CD4-positive, alpha-beta memory T cell (primary cell): ENCODE measurements at regions of chr4 and their contacts with region 1.

Region 1: GRCh38 chr4:242121-242848 is 63.0 kb downstream of the ZNF732 start:
- DNase-seq: peak; percentile 73 to 78 (median 75)
- H3K4me3 ChIP-seq: peak overlapping the region; percentile 63 to 75
- H3K4me3 Mint-ChIP-seq: peak overlapping the region; percentile 87 to 93 (median 89)
- H3K27ac ChIP-seq: peak overlapping the region; percentile 39
- H3K27ac Mint-ChIP-seq: peak overlapping the region; percentile 75 to 95 (median 90)
- H3K4me1 ChIP-seq: peaks cover 6% of the 10 kb centered on the region
- H3K4me1 Mint-ChIP-seq: peaks cover 8 to 11% (median 10%) of the 10 kb centered on the region in 4 donors
- H3K27me3 ChIP-seq: no peaks in the 10 kb centered on the region
- H3K27me3 Mint-ChIP-seq: no peaks in the 10 kb centered on the region

Region 2: GRCh38 chr4:124275-125081 is 117.8 kb before region 1 on chr4 and contains the start of gene ZNF718:
- CTCF ChIA-PET with region 1: no interaction called
- POLR2A ChIA-PET with region 1: no interaction called
- intact Hi-C with region 1: loop called (anchors 1 kb)
- DNase-seq: peak; percentile 82 to 94 (median 91)
- H3K4me3 ChIP-seq: peak within 1 kb of the TSS; percentile 71 to 87
- H3K4me3 Mint-ChIP-seq: peak within 1 kb of the TSS; percentile 95 to 100 (median 98)
- H3K27ac ChIP-seq: peak within 1 kb of the TSS; percentile 69
- H3K27ac Mint-ChIP-seq: peak within 1 kb of the TSS; percentile 96 to 99 (median 97)
- H3K4me1 ChIP-seq: peaks cover 38% of the 10 kb centered on the region
- H3K4me1 Mint-ChIP-seq: peaks cover 22 to 49% (median 40%) of the 10 kb centered on the region in 4 donors
- H3K27me3 ChIP-seq: no peaks in the 10 kb centered on the region
- H3K27me3 Mint-ChIP-seq: no peaks in the 10 kb centered on the region
- total RNA-seq, gene ZNF718: 13.0 to 14.0 TPM

Region 3: GRCh38 chr4:498328-498904 is 256.1 kb after region 1 on chr4:
- CTCF ChIA-PET with region 1: no interaction called
- POLR2A ChIA-PET with region 1: no interaction called
- intact Hi-C with region 1: loop called (anchors 5 kb)
- DNase-seq: no peak
- H3K4me3 ChIP-seq: peak overlapping the region in 1 of 2 donors; percentile 88
- H3K4me3 Mint-ChIP-seq: peak overlapping the region; percentile 92 to 95 (median 93)
- H3K27ac ChIP-seq: peak overlapping the region; percentile 89
- H3K27ac Mint-ChIP-seq: peak overlapping the region; percentile 93 to 97 (median 96)
- H3K4me1 ChIP-seq: peaks cover 22% of the 10 kb centered on the region
- H3K4me1 Mint-ChIP-seq: peaks cover 25 to 65% (median 47%) of the 10 kb centered on the region in 4 donors
- H3K27me3 ChIP-seq: no peaks in the 10 kb centered on the region
- H3K27me3 Mint-ChIP-seq: no peaks in the 10 kb centered on the region

Region 4: DNA sequence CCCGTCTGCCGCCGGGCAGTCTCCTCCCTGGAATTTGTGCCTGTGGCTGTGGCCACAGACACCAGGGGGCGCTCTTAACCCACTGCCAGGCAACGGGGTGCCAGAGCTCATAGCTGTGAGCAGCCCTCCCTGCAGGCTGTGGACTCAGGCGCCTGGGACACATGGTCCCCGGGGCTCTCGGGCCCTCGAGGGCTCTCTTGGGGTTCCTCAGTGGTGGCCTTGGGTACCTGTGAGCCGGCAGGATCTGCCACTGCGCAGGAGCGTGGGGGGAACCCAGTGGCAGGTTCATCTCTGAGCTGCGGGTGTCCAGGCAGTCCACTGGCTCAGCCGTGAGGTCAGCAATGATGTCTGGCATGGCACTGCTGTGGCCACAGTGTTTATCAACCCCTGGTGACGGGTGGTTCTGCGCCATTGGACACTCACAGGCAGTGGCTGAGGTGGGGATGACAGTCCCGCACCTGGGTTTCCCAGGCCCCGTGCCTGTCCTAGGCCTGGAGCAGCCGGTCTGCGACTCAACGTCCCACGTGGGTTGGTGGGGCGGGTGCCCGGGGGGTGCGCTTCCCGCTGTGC is 500.5 kb after region 1 on chr4:
- CTCF ChIA-PET with region 1: interaction called, 3 read pairs
- POLR2A ChIA-PET with region 1: no interaction called
- intact Hi-C with region 1: loop called (anchors 2 kb)
- DNase-seq: peak; percentile 66 to 74 (median 67)
- H3K4me3 ChIP-seq: no peak overlapping the region
- H3K4me3 Mint-ChIP-seq: no peak overlapping the region
- H3K27ac ChIP-seq: no peak overlapping the region
- H3K27ac Mint-ChIP-seq: peak overlapping the region in 2 of 7 donors; percentile 30 to 48
- H3K4me1 ChIP-seq: no peaks in the 10 kb centered on the region
- H3K4me1 Mint-ChIP-seq: peaks cover 0 to 4% (median under 1%) of the 10 kb centered on the region in 4 donors
- H3K27me3 ChIP-seq: no peaks in the 10 kb centered on the region
- H3K27me3 Mint-ChIP-seq: no peaks in the 10 kb centered on the region

Region 5: GRCh38 chr4:986879-987623 is 744.8 kb after region 1 on chr4 and contains the start of gene IDUA:
- CTCF ChIA-PET with region 1: no interaction called
- POLR2A ChIA-PET with region 1: no interaction called
- intact Hi-C with region 1: loop called (anchors 2 kb)
- DNase-seq: peak; percentile 79 to 84 (median 82)
- H3K4me3 ChIP-seq: peak within 1 kb of the TSS; percentile 76 to 83
- H3K4me3 Mint-ChIP-seq: peak within 1 kb of the TSS; percentile 88 to 95 (median 90)
- H3K27ac ChIP-seq: peak within 1 kb of the TSS; percentile 60
- H3K27ac Mint-ChIP-seq: peak within 1 kb of the TSS; percentile 40 to 92 (median 83)
- H3K4me1 ChIP-seq: peaks cover 34% of the 10 kb centered on the region
- H3K4me1 Mint-ChIP-seq: peaks cover 8 to 35% (median 15%) of the 10 kb centered on the region in 4 donors
- H3K27me3 ChIP-seq: no peaks in the 10 kb centered on the region
- H3K27me3 Mint-ChIP-seq: no peaks in the 10 kb centered on the region
- total RNA-seq, gene IDUA: 63.0 to 64.1 TPM

Region 6: GRCh38 chr4:1260418-1261106 is 1018.3 kb after region 1 on chr4:
- CTCF ChIA-PET with region 1: no interaction called
- POLR2A ChIA-PET with region 1: no interaction called
- intact Hi-C with region 1: loop called (anchors 10 kb)
- DNase-seq: no peak
- H3K4me3 ChIP-seq: no peak overlapping the region
- H3K4me3 Mint-ChIP-seq: peak overlapping the region in 1 of 8 donors; percentile 32
- H3K27ac ChIP-seq: no peak overlapping the region
- H3K27ac Mint-ChIP-seq: peak overlapping the region in 3 of 7 donors; percentile 4 to 37 (median 37)
- H3K4me1 ChIP-seq: peaks cover 2% of the 10 kb centered on the region
- H3K4me1 Mint-ChIP-seq: peaks cover 14 to 48% (median 27%) of the 10 kb centered on the region in 4 donors
- H3K27me3 ChIP-seq: no peaks in the 10 kb centered on the region
- H3K27me3 Mint-ChIP-seq: no peaks in the 10 kb centered on the region